IMR-90 (cell line): ENCODE measurements at regions of chr17 and their contacts with region 1.

Region 1: DNA sequence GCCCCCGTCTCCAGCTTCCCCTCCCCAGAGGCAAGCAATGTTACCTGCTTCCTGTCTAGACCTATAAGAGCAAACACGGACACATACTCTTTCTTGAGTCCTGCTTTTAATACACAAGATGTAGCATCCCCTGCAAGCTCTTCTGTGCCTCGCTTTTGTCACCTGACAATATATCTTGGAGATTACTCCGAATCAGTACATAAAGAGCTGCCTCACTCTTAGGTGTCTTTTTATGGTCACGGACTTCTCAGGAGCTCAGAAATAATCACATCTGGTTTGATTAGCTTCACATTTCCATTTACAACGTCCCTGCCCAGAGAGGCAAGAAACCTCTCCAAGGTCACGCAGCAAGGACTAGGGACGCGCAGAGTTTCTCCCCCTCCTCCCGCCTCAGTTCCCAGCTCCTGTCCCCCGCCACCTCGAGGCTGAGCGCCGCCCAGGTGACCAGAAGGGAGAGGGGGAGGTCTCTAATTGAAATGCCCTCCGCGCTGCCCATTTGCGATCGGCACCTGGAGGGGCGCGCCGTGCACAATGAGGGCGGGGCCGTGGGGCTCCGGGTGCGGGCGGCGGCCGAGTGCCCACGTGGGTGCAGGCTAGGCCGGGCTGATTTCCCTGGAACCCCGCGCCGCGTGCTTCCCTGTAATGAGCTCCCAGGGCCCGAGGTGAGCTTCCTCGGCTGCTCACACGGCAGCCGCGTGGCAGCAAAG is 13.8 kb upstream of the SEZ6 start:
- DNase-seq: no peak
- ATAC-seq: no peak
- H3K4me3 ChIP-seq: no peak overlapping the region
- H3K27ac ChIP-seq: no peak overlapping the region
- H3K4me1 ChIP-seq: no peaks in the 10 kb centered on the region
- H3K27me3 ChIP-seq: peaks cover 87% of the 10 kb centered on the region
- CTCF ChIP-seq: no peak
- POLR2A ChIP-seq: no peak
- RAD21 ChIP-seq: no peak

Region 2: DNA sequence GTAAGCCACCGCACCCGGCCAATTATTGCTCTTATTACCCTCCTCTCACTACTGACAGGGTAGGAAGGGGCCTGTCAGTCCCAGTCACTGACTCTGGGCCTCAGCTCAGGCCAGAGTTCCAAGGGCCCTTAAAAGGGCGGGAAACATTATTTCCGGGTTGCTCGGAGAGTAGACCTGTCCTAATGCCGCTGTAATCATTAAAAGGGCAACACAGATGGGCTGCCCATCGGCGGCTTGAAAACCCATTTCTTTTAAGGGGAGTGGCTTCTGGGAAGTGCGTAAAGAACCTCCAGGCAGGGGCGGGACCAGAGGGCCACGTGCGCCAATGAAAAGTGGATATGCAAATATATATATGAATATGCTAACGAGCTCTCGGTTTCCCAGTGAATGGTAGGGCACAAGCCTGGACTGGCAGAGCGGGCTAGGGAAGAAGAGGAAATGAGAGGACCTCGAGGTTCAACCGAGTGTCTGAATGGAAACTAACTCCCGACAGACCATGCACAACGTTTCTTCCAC is 50.0 kb after region 1 on chr17:
- CTCF ChIA-PET with region 1: no interaction called
- POLR2A ChIA-PET with region 1: no interaction called
- dilution Hi-C with region 1: no loop called
- in situ Hi-C with region 1: no loop called
- intact Hi-C with region 1: loop called (anchors 5 kb)
- DNase-seq: peak; percentile 9
- ATAC-seq: peak; percentile 64
- H3K4me3 ChIP-seq: no peak overlapping the region
- H3K27ac ChIP-seq: no peak overlapping the region
- H3K4me1 ChIP-seq: no peaks in the 10 kb centered on the region
- H3K27me3 ChIP-seq: peaks cover 30% of the 10 kb centered on the region
- CTCF ChIP-seq: no peak
- POLR2A ChIP-seq: no peak
- RAD21 ChIP-seq: no peak